ENCODE measurements at regions of chr17 and their contacts with region 1.

Region 1: DNA sequence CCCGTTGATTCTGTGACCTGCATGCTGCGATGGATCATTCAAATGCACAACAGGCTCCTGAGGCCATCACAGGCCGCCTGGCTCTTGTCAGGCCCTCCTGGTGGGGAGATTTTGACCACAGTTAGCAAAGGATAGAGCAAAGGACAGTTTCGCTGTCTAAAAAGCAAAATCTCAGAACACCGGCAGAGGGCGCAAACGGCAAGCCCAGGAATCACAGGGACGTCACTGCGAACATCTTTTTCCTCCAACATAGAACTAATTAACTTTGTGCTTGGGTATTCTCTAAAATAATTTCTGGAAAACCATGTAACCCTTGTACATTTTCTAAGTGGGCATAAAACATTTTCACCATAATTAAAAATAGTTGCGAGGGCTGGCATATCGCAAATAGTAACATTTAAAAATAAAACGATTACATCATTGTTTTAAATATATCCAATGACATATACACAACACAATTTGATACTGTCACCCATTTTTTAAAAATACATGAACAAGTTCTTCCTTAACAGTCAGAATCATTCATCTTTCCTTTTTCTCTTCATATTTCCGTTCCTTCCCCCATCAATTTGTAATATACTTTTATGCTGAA is 19.7 kb upstream of the SLC47A1 start:
- DNase-seq: peak; percentile 59 to 81 (median 78)
- H3K4me3 ChIP-seq: no peak overlapping the region
- H3K27ac ChIP-seq: peak overlapping the region in 1 of 2 donors; percentile 21
- H3K4me1 ChIP-seq: no peaks in the 10 kb centered on the region
- H3K27me3 ChIP-seq: no peaks in the 10 kb centered on the region
- CTCF ChIP-seq: peak; percentile 76 to 96 (median 93)
- EP300 ChIP-seq: no peak
- POLR2A ChIP-seq: no peak

Region 2: GRCh38 chr17:19766422-19767270 is 252.7 kb after region 1 on chr17:
- intact Hi-C with region 1: loop called (anchors 1 to 5 kb)
- DNase-seq: peak; percentile 73 to 90 (median 87)
- H3K4me3 ChIP-seq: no peak overlapping the region
- H3K27ac ChIP-seq: no peak overlapping the region
- H3K4me1 ChIP-seq: peaks cover 2% of the 10 kb centered on the region
- H3K27me3 ChIP-seq: no peaks in the 10 kb centered on the region
- CTCF ChIP-seq: peak; percentile 95 to 96 (median 95)
- EP300 ChIP-seq: no peak
- POLR2A ChIP-seq: peak; percentile 28